Psoas muscle (tissue), 8 donors: ENCODE measurements at regions of chr17 and their contacts with region 1.

Region 1: GRCh38 chr17:59753522-59754467 is 46.3 kb downstream of the VMP1 start:
- DNase-seq: no peak
- ATAC-seq: peak; percentile 77 to 93 (median 91)
- H3K4me3 ChIP-seq: peak overlapping the region; percentile 52
- H3K27ac ChIP-seq: peak overlapping the region; percentile 51
- H3K4me1 ChIP-seq: peaks cover 14% of the 10 kb centered on the region
- H3K27me3 ChIP-seq: no peaks in the 10 kb centered on the region
- CTCF ChIP-seq: peak; percentile 79

Region 2: GRCh38 chr17:59634632-59635541 is 118.9 kb before region 1 on chr17:
- intact Hi-C with region 1: no loop called
- DNase-seq: no peak
- ATAC-seq: no peak
- H3K4me3 ChIP-seq: no peak overlapping the region
- H3K27ac ChIP-seq: peak overlapping the region; percentile 4
- H3K4me1 ChIP-seq: peaks cover 63% of the 10 kb centered on the region
- H3K27me3 ChIP-seq: no peaks in the 10 kb centered on the region
- CTCF ChIP-seq: no peak

Region 3: GRCh38 chr17:59846394-59847165 is 92.8 kb after region 1 on chr17:
- intact Hi-C with region 1: loop called in 1 of 2 experiments (anchors 5 kb)
- DNase-seq: peak; percentile 41 to 79
- ATAC-seq: peak; percentile 24 to 65 (median 48)
- H3K4me3 ChIP-seq: peak overlapping the region; percentile 9
- H3K27ac ChIP-seq: peak overlapping the region; percentile 92
- H3K4me1 ChIP-seq: peaks cover 40% of the 10 kb centered on the region
- H3K27me3 ChIP-seq: no peaks in the 10 kb centered on the region
- CTCF ChIP-seq: no peak

Region 4: GRCh38 chr17:59859444-59860025 is 105.7 kb after region 1 on chr17:
- intact Hi-C with region 1: loop called (anchors 2 kb)
- DNase-seq: no peak
- ATAC-seq: peak; percentile 61 to 76 (median 68)
- H3K4me3 ChIP-seq: no peak overlapping the region
- H3K27ac ChIP-seq: no peak overlapping the region
- H3K4me1 ChIP-seq: no peaks in the 10 kb centered on the region
- H3K27me3 ChIP-seq: no peaks in the 10 kb centered on the region
- CTCF ChIP-seq: peak; percentile 71